Right ventricle myocardium inferior (tissue), 1 donor: ENCODE measurements at regions of chr4 and their contacts with region 1.

Region 1: GRCh38 chr4:18111081-18111480 is 89.5 kb upstream of the LCORL start:
- DNase-seq: no peak
- ATAC-seq: no peak

Region 2: GRCh38 chr4:18021722-18022571 is 89.1 kb before region 1 on chr4 and contains the start of gene LCORL:
- intact Hi-C with region 1: no loop called
- DNase-seq: peak; percentile 97
- ATAC-seq: peak; percentile 95
- total RNA-seq, gene LCORL: 8.7 TPM

Region 3: DNA sequence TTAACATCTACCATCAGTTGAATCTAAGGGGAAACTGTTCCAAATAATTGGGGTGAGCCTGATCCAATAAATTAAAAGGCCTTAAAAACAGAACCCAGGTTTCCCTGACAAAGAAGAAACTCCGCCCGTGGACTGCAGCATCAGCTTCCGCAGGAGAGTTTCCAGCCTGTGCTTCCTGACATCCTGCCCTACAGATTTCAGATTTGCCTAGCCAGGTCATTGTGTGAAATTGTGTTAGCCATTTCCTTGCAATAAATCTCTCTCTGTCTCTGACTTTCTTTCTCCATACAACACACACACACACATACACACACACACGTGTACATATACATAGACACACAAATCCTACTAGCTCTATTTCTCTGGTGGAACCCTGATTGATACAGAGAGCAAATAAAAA is 41.3 kb before region 1 on chr4:
- intact Hi-C with region 1: loop called (anchors 5 kb)
- DNase-seq: no peak
- ATAC-seq: no peak

Region 4: DNA sequence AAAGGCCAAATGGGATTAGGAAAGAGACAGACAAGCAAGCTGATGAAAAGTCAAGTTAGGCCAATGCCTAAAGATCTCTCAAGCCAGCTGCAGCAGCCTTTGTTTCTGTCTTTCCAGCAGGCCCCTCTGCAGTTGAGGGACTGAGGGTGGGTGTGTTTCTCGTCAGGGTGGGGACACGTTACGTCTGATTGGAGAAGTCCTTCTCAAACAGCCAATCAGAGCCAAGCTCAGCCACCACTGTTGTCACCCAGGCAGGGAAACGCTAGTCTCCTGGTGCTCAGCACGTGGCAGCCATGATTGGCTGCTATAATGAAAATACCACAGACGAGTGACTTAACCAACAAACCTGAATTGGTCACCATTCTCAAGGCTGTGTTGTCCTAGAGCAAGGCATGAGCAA is 87.6 kb after region 1 on chr4:
- intact Hi-C with region 1: no loop called
- DNase-seq: no peak
- ATAC-seq: no peak

Region 5: DNA sequence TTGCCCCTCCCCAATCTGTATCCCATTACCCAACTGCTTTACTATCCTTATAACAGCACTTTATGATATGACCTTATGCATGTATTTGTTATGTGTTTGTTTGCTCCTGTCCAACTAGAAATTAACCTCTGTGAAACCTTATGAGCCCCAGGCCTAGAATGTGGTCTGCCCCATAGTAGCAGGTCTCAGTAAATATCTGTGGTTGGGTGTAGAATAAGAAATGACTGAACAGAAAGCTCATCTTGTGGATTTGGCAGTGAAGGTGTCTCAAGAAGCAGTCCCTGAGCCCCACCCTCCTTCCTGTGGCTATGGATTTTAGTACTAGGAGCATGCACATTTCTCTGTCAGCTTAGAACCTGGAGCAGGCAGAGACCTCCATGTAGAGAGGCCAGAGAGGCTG is 139.5 kb after region 1 on chr4:
- intact Hi-C with region 1: no loop called
- DNase-seq: no peak
- ATAC-seq: no peak